Colonic mucosa (tissue), 4 donors: ENCODE measurements at regions of chr15 and their contacts with region 1.

Region 1: GRCh38 chr15:47514211-47514652 is 203.1 kb upstream of the SEMA6D start:
- DNase-seq: no peak
- H3K4me3 ChIP-seq: no peak overlapping the region
- H3K27ac ChIP-seq: no peak overlapping the region
- H3K4me1 ChIP-seq: no peaks in the 10 kb centered on the region
- H3K27me3 ChIP-seq: no peaks in the 10 kb centered on the region
- CTCF ChIP-seq: no peak

Region 2: DNA sequence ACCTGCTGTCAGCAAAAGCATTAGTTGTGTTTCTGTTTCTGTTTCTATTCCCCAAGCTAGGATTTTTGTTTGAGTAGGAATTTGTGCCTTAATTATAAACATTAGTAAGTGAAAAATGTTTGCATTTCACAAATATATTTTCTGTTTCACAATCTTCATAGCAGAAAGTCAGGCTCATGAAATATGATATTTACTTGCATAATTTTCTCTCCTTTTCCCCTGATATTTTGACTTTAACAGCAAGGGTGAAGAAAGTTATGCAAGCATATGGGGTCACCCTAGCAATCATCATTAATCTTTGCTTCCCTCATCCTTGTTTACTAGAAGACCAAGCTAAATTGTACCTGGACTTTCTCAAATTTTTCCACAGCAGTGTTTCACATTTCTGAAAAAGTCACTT is 62.8 kb after region 1 on chr15:
- intact Hi-C with region 1: loop called (anchors 10 kb)
- DNase-seq: no peak
- H3K4me3 ChIP-seq: no peak overlapping the region
- H3K27ac ChIP-seq: no peak overlapping the region
- H3K4me1 ChIP-seq: no peaks in the 10 kb centered on the region
- H3K27me3 ChIP-seq: no peaks in the 10 kb centered on the region
- CTCF ChIP-seq: no peak